HCT116 (cell line): ENCODE measurements at regions of chr1 and their contacts with region 1.

Region 1: DNA sequence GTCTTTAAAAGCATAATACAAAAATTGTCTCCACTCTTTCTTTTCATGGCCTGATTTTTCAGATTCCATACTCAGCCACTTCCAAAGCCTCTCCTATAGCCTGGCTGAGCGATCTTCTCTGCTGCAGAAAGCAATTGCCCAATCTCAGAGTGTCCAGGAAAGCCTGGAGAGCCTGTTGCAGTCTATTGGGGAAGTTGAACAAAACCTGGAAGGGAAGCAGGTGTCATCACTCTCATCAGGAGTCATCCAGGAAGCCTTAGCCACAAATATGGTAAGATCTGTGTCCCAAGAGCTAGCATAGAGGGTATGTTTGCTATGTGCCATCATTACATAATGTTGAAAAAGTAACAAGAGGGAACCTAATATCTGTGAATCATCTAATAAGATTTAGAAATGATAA is 130.7 kb upstream of the BMP8A start:
- DNase-seq: no peak
- ATAC-seq: no peak
- H3K4me3 ChIP-seq: no peak overlapping the region
- H3K27ac ChIP-seq: no peak overlapping the region
- H3K4me1 ChIP-seq: no peaks in the 10 kb centered on the region
- H3K27me3 ChIP-seq: no peaks in the 10 kb centered on the region
- CTCF ChIP-seq: no peak
- POLR2A ChIP-seq: no peak
- RAD21 ChIP-seq: no peak

Region 2: DNA sequence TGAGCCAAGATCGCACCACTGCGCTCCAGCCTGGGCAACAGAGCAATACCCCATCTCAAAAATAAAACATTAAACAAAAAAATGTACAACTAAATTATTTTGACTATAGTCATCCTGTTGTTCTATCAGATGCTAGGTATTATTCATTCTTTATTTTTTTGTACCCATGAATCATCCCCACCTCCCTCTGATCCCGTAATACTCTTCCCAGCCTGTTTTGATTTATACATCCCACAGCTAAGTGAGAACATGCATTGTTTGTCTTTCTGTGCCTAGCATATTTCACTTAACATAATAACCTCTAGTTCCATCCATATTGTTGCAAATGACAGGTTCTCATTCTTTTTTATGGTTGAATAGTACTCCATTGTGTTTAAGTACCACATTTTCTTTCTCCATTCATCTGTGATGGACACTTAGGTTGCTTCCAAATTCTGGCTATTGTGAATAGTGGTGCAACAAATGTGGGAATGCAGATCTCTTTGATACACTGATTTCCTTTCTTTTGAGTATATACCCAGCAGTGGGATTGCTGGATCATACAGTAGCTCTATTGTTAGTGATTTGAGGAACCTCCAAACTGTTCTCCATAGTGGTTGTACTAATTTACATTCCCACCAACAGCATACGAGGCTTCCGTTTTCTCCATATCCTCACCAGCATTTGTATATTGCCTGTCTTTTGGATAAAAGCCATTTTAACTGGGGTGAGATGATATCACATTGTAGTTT is 71.8 kb before region 1 on chr1:
- CTCF ChIA-PET with region 1: no interaction called
- POLR2A ChIA-PET with region 1: no interaction called
- RAD21 ChIA-PET with region 1: no interaction called
- intact Hi-C with region 1: loop called (anchors 5 kb)
- DNase-seq: no peak
- ATAC-seq: no peak
- H3K4me3 ChIP-seq: no peak overlapping the region
- H3K27ac ChIP-seq: no peak overlapping the region
- H3K4me1 ChIP-seq: no peaks in the 10 kb centered on the region
- H3K27me3 ChIP-seq: no peaks in the 10 kb centered on the region
- CTCF ChIP-seq: no peak
- POLR2A ChIP-seq: no peak
- RAD21 ChIP-seq: no peak

Region 3: GRCh38 chr1:39344394-39345154 is 16.2 kb before region 1 on chr1:
- CTCF ChIA-PET with region 1: no interaction called
- POLR2A ChIA-PET with region 1: no interaction called
- RAD21 ChIA-PET with region 1: no interaction called
- intact Hi-C with region 1: no loop called
- DNase-seq: no peak
- ATAC-seq: no peak
- H3K4me3 ChIP-seq: no peak overlapping the region
- H3K27ac ChIP-seq: no peak overlapping the region
- H3K4me1 ChIP-seq: no peaks in the 10 kb centered on the region
- H3K27me3 ChIP-seq: no peaks in the 10 kb centered on the region
- CTCF ChIP-seq: no peak
- POLR2A ChIP-seq: no peak
- RAD21 ChIP-seq: no peak